Activated B cell treated with CpG ODN at 0.5 μM for 24 hours (primary cell): ENCODE measurements at regions of chr3 and their contacts with region 1.

Region 1: DNA sequence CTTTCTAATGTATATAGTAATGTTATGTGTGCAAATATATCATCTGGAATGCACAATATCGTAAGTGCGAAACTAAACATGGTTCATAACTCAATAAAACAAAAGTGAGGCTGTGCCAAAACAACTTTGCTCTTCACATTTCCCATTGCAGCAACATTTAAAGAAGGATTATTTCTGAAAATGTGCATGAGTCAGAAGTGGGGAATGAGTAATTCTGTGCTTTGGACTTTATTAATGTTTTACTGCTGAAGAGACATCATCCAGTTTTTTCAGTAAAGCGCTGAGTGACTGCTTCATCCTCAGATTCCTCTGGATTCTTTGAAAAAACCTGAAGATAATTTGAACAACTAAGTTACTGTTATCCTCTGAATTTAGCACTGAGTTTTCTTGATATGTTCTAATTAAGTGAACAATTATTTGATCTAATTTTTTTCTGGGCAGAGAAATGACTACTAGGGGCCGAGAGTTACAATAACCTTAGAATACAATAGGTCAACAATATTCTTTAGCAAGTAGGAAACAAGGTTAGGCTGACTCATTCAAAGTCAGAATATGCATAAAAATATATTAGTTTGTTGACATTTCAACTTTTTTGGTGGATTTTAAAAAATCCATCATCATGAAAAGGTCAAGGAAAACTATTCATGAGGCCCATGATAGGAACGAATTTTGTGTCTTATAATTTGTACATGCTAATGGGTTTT is 20.0 kb upstream of the PLCL2 start:
- DNase-seq: no peak
- ATAC-seq: no peak
- H3K4me3 Mint-ChIP-seq: no peak overlapping the region
- H3K27ac Mint-ChIP-seq: no peak overlapping the region
- H3K4me1 Mint-ChIP-seq: no peaks in the 10 kb centered on the region
- H3K27me3 Mint-ChIP-seq: peaks cover 9% of the 10 kb centered on the region
- CTCF ChIP-seq: no peak

Region 2: DNA sequence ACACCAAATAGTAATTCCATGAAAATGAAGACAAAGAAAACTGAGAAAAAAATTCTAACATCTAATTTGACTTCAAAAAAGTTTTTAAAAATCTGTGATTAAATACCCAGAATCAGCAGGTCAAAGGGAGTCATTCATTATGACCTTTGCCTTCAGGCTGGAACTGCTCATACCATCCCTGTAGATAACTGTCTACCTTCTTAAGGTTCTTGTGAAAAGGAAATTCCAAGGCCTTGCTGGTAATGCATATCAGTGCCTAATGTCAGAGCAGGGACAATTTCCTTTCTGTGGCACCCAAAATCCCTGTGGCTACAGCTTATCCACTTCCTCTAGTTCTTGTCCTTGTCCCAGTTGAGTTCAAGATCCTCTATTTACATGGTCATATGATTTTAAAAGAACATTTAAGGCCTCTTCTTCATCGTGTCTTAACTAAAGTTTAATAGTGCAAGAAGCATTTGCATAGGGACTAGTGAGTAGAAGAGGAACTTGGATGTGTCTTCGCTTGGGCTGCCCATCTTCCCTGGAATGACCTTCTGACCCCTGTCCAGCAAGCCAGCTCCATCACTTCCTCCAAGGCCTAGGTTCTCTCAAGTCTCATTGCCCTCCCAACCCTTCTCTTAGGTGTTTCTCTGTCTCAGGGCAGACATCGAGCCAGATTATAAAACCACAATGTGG is 11.3 kb after region 1 on chr3:
- CTCF ChIA-PET with region 1: no interaction called
- POLR2A ChIA-PET with region 1: no interaction called
- intact Hi-C with region 1: loop called (anchors 2 kb)
- DNase-seq: no peak
- ATAC-seq: no peak
- H3K4me3 Mint-ChIP-seq: no peak overlapping the region
- H3K27ac Mint-ChIP-seq: no peak overlapping the region
- H3K4me1 Mint-ChIP-seq: peaks cover 5% of the 10 kb centered on the region
- H3K27me3 Mint-ChIP-seq: peaks cover 4% of the 10 kb centered on the region
- CTCF ChIP-seq: no peak